Natural killer cell (primary cell): ENCODE measurements at regions of chr9 and their contacts with region 1.

Region 1: DNA sequence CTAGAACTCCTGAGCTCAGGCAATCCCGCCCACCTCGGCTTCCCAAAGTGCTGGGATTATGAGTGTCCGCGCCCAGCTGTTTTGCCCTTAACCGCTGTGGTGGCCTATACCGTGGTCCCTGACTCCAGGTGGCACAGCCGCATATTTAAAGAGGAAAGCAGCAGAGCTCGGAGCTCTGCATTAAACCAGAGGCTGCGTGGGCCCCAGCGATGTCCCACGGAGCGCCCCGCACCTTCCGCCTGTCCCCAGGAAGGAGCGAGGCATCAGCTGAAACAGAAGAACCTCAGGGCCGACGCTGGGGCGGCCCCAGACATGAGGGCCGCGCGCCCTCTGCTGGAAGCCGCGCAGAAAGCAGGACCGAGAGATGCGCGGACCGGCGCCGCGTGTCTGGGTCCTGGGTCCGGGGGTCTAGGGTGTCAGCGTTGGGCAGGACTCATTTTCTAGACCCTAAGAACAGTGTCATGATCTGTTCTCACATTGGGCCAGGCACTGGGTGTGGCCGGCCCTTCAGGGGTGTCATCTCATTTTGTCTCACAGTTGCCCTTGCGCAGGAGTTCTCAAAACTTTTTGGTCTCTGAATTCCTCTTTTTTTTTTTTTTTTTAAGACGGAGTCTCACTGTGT is 37.7 kb downstream of the LAMC3 start:
- DNase-seq: peak; percentile 63 to 82
- ATAC-seq: peak; percentile 85 to 97 (median 95)
- H3K4me3 ChIP-seq: no peak overlapping the region
- H3K4me3 Mint-ChIP-seq: no peak overlapping the region
- H3K27ac ChIP-seq: no peak overlapping the region
- H3K27ac Mint-ChIP-seq: no peak overlapping the region
- H3K4me1 ChIP-seq: peaks cover 12% of the 10 kb centered on the region
- H3K4me1 Mint-ChIP-seq: peaks cover 0 to 3% of the 10 kb centered on the region in 2 donors
- H3K27me3 ChIP-seq: no peaks in the 10 kb centered on the region
- H3K27me3 Mint-ChIP-seq: peaks cover 7% of the 10 kb centered on the region in 2 donors
- CTCF ChIP-seq: peak; percentile 95

Region 2: GRCh38 chr9:130461218-130461630 is 585.5 kb before region 1 on chr9:
- intact Hi-C with region 1: loop called (anchors 5 kb)
- DNase-seq: peak; percentile 66 to 83
- ATAC-seq: peak; percentile 61 to 78 (median 62)
- H3K4me3 ChIP-seq: no peak overlapping the region
- H3K4me3 Mint-ChIP-seq: no peak overlapping the region
- H3K27ac ChIP-seq: no peak overlapping the region
- H3K27ac Mint-ChIP-seq: no peak overlapping the region
- H3K4me1 ChIP-seq: no peaks in the 10 kb centered on the region
- H3K4me1 Mint-ChIP-seq: no peaks in the 10 kb centered on the region
- H3K27me3 ChIP-seq: no peaks in the 10 kb centered on the region
- H3K27me3 Mint-ChIP-seq: peaks cover 8 to 10% of the 10 kb centered on the region in 2 donors
- CTCF ChIP-seq: peak; percentile 85

Region 3: GRCh38 chr9:130712564-130713285 is 334.0 kb before region 1 on chr9:
- intact Hi-C with region 1: loop called (anchors 2 kb)
- DNase-seq: peak; percentile 91 to 97
- ATAC-seq: peak; percentile 96 to 99 (median 97)
- H3K4me3 ChIP-seq: peak overlapping the region; percentile 73
- H3K4me3 Mint-ChIP-seq: peak overlapping the region; percentile 96
- H3K27ac ChIP-seq: peak overlapping the region; percentile 92
- H3K27ac Mint-ChIP-seq: peak overlapping the region; percentile 90 to 95
- H3K4me1 ChIP-seq: peaks cover 19% of the 10 kb centered on the region
- H3K4me1 Mint-ChIP-seq: peaks cover 30 to 33% of the 10 kb centered on the region in 2 donors
- H3K27me3 ChIP-seq: no peaks in the 10 kb centered on the region
- H3K27me3 Mint-ChIP-seq: no peaks in the 10 kb centered on the region
- CTCF ChIP-seq: no peak

Region 4: DNA sequence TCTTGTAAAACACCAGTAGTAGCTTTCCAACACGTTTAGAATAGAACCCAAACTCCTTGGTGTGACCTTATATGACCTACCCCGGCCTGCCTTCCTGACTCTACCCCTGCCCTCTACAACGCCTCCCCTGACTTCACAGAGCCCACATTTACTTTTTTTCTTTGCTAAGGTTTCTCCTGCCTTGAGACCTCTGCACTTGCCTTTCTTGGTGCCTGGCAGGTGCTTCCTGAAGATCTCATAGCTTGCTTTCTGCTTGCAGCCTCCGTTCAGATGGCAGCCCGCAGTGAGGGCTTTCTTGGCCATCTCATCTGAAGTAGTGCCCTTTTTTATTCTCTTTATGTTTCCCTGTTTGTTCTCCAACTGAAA is 103.0 kb after region 1 on chr9:
- intact Hi-C with region 1: no loop called
- DNase-seq: no peak
- ATAC-seq: peak in 1 of 3 donors; percentile 24
- H3K4me3 ChIP-seq: no peak overlapping the region
- H3K4me3 Mint-ChIP-seq: no peak overlapping the region
- H3K27ac ChIP-seq: no peak overlapping the region
- H3K27ac Mint-ChIP-seq: peak overlapping the region; percentile 30 to 46
- H3K4me1 ChIP-seq: no peaks in the 10 kb centered on the region
- H3K4me1 Mint-ChIP-seq: peaks cover 12 to 13% of the 10 kb centered on the region in 2 donors
- H3K27me3 ChIP-seq: no peaks in the 10 kb centered on the region
- H3K27me3 Mint-ChIP-seq: no peaks in the 10 kb centered on the region
- CTCF ChIP-seq: no peak

Region 5: GRCh38 chr9:131927091-131927490 is 880.4 kb after region 1 on chr9:
- intact Hi-C with region 1: no loop called
- DNase-seq: no peak
- ATAC-seq: no peak
- H3K4me3 ChIP-seq: no peak overlapping the region
- H3K4me3 Mint-ChIP-seq: no peak overlapping the region
- H3K27ac ChIP-seq: no peak overlapping the region
- H3K27ac Mint-ChIP-seq: no peak overlapping the region
- H3K4me1 ChIP-seq: no peaks in the 10 kb centered on the region
- H3K4me1 Mint-ChIP-seq: peaks cover 0 to 23% of the 10 kb centered on the region in 2 donors
- H3K27me3 ChIP-seq: no peaks in the 10 kb centered on the region
- H3K27me3 Mint-ChIP-seq: no peaks in the 10 kb centered on the region
- CTCF ChIP-seq: no peak